BJ (cell line): ENCODE measurements at regions of chr4 and their contacts with region 1.

Region 1: GRCh38 chr4:99563310-99564186 is at the start of gene TRMT10A:
- DNase-seq: peak; percentile 82
- H3K4me3 ChIP-seq: peak within 1 kb of the TSS; percentile 67
- H3K27me3 ChIP-seq: no peaks in the 10 kb centered on the region
- CTCF ChIP-seq: no peak
- polyA plus RNA-seq, gene TRMT10A: 1.7 and 4.3 TPM in 2 replicates

Region 2: GRCh38 chr4:99808260-99808857 is 244.8 kb after region 1 on chr4:
- CTCF ChIA-PET with region 1: interaction called, 19 read pairs
- POLR2A ChIA-PET with region 1: no interaction called
- DNase-seq: no peak
- H3K4me3 ChIP-seq: no peak overlapping the region
- H3K27me3 ChIP-seq: peaks cover 1% of the 10 kb centered on the region; the same call in 1 of the 2 replicates
- CTCF ChIP-seq: peak; percentile 49